Activated B cell treated with CpG ODN at 0.5 μM for 24 hours (primary cell): ENCODE measurements at regions of chr20 and their contacts with region 1.

Region 1: GRCh38 chr20:47379433-47380150 is 23.1 kb upstream of the ZMYND8 start:
- DNase-seq: no peak
- ATAC-seq: no peak
- H3K4me3 Mint-ChIP-seq: no peak overlapping the region
- H3K27ac Mint-ChIP-seq: no peak overlapping the region
- H3K4me1 Mint-ChIP-seq: peaks cover 13% of the 10 kb centered on the region
- H3K27me3 Mint-ChIP-seq: no peaks in the 10 kb centered on the region
- CTCF ChIP-seq: no peak

Region 2: GRCh38 chr20:46746956-46747526 is 632.6 kb before region 1 on chr20:
- CTCF ChIA-PET with region 1: interaction called, 5 read pairs
- POLR2A ChIA-PET with region 1: no interaction called
- intact Hi-C with region 1: loop called (anchors 5 kb)
- DNase-seq: no peak
- ATAC-seq: no peak
- H3K4me3 Mint-ChIP-seq: no peak overlapping the region
- H3K27ac Mint-ChIP-seq: no peak overlapping the region
- H3K4me1 Mint-ChIP-seq: no peaks in the 10 kb centered on the region
- H3K27me3 Mint-ChIP-seq: peaks cover 56% of the 10 kb centered on the region
- CTCF ChIP-seq: no peak

Region 3: DNA sequence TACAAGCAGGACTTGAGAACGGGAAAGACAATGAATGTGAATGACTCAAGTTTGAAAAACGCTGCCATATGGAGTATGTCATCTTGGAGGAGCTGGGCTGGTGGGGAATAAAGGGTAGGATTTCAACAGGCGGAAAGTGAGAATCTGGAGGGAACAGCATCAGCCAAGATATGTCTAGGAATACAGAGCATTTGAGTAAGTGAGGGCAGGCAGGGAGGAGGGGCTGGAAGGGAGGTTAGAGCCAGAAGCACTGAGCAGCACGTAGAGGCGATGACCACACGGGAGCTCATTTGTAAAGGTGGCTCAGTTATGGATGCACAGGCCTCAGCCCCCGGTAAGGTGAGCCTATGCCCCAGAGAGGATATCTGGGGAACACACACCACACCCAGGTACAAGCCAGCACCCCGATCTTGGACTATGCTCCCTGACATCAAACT is 138.2 kb before region 1 on chr20:
- CTCF ChIA-PET with region 1: interaction called, 4 read pairs
- POLR2A ChIA-PET with region 1: interaction called, 10 read pairs
- intact Hi-C with region 1: no loop called
- DNase-seq: no peak
- ATAC-seq: no peak
- H3K4me3 Mint-ChIP-seq: no peak overlapping the region
- H3K27ac Mint-ChIP-seq: peak overlapping the region; percentile 39
- H3K4me1 Mint-ChIP-seq: no peaks in the 10 kb centered on the region
- H3K27me3 Mint-ChIP-seq: no peaks in the 10 kb centered on the region
- CTCF ChIP-seq: no peak

Region 4: DNA sequence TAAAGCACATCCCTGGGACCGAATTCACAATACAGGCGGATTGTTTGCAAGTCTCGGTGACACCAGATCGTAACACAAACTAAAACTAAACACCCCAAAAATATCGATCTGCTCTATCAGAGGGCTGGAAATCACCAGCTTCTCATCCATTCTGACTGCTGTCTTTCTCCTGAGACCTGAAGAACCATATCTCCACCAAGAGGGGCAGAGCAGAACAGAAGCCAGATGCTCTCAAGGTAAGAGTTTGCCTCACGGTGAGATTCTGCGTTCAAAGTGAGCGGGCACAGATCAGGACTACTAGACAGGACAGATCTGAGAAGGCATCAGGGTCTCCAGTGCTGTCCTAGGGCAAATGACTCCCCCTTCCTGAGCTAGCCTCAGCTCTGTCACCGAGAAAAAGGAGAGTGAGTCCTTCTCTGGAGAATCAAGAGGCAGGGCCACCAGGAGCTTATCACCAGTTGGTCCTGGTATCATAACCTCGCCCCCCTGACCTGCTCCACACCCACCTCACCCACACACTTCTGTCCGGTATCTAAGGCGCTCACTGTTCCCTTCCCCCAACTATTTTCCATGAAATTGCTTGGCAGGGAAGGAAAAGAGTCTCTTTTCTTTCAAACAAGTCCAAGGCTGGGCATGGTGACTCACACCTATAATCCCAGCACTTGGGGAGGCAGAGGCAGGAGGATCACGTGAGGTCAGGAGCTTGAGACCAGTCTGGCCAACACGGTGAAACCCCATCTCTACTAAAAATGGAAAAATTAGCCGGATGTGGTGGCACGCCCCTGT is 100.8 kb before region 1 on chr20:
- CTCF ChIA-PET with region 1: interaction called, 398 read pairs
- POLR2A ChIA-PET with region 1: interaction called, 47 read pairs
- intact Hi-C with region 1: loop called (anchors 1 kb)
- DNase-seq: no peak
- ATAC-seq: no peak
- H3K4me3 Mint-ChIP-seq: no peak overlapping the region
- H3K27ac Mint-ChIP-seq: peak overlapping the region; percentile 59
- H3K4me1 Mint-ChIP-seq: peaks cover 15% of the 10 kb centered on the region
- H3K27me3 Mint-ChIP-seq: no peaks in the 10 kb centered on the region
- CTCF ChIP-seq: no peak

Region 5: GRCh38 chr20:47348539-47349142 is 31.0 kb before region 1 on chr20:
- CTCF ChIA-PET with region 1: interaction called, 84 read pairs
- POLR2A ChIA-PET with region 1: interaction called, 4 read pairs
- intact Hi-C with region 1: no loop called
- DNase-seq: no peak
- ATAC-seq: peak; percentile 23
- H3K4me3 Mint-ChIP-seq: no peak overlapping the region
- H3K27ac Mint-ChIP-seq: no peak overlapping the region
- H3K4me1 Mint-ChIP-seq: peaks cover 8% of the 10 kb centered on the region
- H3K27me3 Mint-ChIP-seq: no peaks in the 10 kb centered on the region
- CTCF ChIP-seq: no peak

Region 6: GRCh38 chr20:47418061-47418912 is 38.7 kb after region 1 on chr20:
- CTCF ChIA-PET with region 1: interaction called, 55 read pairs
- POLR2A ChIA-PET with region 1: interaction called, 30 read pairs
- intact Hi-C with region 1: loop called (anchors 5 kb)
- DNase-seq: no peak
- ATAC-seq: no peak
- H3K4me3 Mint-ChIP-seq: no peak overlapping the region
- H3K27ac Mint-ChIP-seq: peak overlapping the region; percentile 100
- H3K4me1 Mint-ChIP-seq: peaks cover 73% of the 10 kb centered on the region
- H3K27me3 Mint-ChIP-seq: no peaks in the 10 kb centered on the region
- CTCF ChIP-seq: no peak

Region 7: GRCh38 chr20:47620808-47621805 is 241.5 kb after region 1 on chr20:
- CTCF ChIA-PET with region 1: interaction called, 50 read pairs
- POLR2A ChIA-PET with region 1: interaction called, 7 read pairs
- intact Hi-C with region 1: loop called (anchors 1 kb)
- DNase-seq: no peak
- ATAC-seq: peak; percentile 58
- H3K4me3 Mint-ChIP-seq: no peak overlapping the region
- H3K27ac Mint-ChIP-seq: peak overlapping the region; percentile 68
- H3K4me1 Mint-ChIP-seq: peaks cover 32% of the 10 kb centered on the region
- H3K27me3 Mint-ChIP-seq: no peaks in the 10 kb centered on the region
- CTCF ChIP-seq: peak; percentile 29